Mucosa of descending colon (tissue), 3 donors: ENCODE measurements at regions of chr15 and their contacts with region 1.

Region 1: GRCh38 chr15:41989259-41989933 is 17.0 kb upstream of the EHD4 start:
- DNase-seq: peak; percentile 82 to 94 (median 92)
- ATAC-seq: peak; percentile 96
- H3K4me3 ChIP-seq: no peak overlapping the region
- H3K4me1 ChIP-seq: no peaks in the 10 kb centered on the region
- CTCF ChIP-seq: peak; percentile 99

Region 2: GRCh38 chr15:42056934-42057779 is 67.8 kb after region 1 on chr15:
- intact Hi-C with region 1: loop called in 1 of 2 experiments (anchors 5 kb)
- DNase-seq: peak; percentile 78 to 85 (median 81)
- ATAC-seq: peak; percentile 94
- H3K4me3 ChIP-seq: no peak overlapping the region
- H3K4me1 ChIP-seq: peaks cover 6% of the 10 kb centered on the region
- CTCF ChIP-seq: peak; percentile 36

Region 3: DNA sequence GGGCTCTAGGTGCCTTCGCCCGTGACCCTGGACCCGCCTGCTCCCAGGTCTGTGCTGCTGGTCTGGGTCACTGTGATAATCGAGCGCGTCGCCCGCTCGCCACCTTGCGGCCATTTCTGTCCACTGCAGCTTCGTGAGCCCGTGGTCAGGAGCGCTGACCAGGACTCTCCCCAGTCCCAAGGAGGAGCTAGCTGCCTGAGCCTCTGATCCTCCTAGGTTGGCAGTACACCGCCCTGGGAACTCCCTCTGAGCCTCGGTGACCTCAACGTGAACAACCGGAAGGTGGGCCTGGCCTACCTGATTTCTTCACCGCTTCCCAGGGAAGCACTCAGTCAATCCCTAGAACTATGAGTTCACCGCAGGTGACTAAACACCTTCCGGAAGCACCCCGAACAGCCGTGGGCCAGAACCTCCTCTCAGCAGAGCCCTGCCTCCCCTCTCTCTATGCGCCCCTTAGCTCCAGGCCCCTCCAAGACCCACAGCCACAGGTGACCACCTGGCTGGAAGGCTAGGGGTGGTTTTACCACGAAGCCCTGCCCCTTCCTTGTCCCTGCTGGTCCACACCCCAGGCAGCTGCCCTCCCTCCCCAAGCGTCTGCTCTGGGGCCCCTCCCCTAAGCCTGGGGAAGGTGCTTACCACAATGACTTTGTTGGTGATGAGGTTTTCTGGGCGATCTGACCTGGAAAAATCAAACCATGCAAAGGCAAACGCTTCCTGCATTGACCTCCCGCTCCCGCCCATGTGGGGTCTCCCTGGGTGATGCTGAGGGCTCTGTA is 95.3 kb after region 1 on chr15:
- intact Hi-C with region 1: loop called in 1 of 2 experiments (anchors 10 kb)
- DNase-seq: peak; percentile 81 to 88 (median 81)
- ATAC-seq: peak; percentile 92
- H3K4me3 ChIP-seq: no peak overlapping the region
- H3K4me1 ChIP-seq: peaks cover 8% of the 10 kb centered on the region
- CTCF ChIP-seq: peak; percentile 81